Heart right ventricle (tissue), 16 donors: ENCODE measurements at regions of chr1 and their contacts with region 1.

Region 1: DNA sequence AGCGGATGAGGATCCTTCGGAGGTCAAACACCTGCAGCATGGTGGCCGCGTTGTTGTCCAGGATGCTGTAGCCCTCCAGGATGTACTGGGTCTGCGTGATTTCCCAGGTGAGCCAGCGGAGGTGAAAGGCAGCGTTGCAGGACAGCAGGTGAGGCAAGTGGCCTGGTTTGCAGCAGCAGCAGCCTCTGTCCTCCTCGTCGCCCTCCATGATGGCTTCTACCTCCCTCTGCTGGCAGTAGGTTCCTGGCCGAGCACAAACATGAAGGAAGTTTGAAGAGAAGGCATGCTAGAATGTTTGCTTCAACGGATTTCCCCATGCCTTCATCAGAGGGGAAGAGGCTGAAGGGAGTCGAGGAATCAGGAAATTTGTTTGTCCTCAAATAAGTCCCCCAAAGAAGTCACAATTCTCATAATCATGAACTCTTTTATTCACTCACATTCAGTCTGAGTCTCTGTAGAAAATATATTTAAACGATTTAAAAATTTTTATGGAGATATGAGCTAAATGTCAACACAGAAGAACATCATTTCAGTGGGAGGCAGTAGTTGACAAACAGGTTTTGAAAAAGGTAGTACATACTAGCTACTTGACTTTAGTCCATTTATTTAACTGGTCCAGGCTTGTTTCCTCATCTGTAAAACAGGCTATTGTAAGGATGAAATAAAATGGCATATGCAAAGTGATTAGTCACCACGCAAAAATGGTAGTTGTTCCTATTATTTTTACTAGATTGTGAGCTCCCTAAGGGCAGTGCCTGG is 74.9 kb downstream of the NTPCR start:
- DNase-seq: peak; percentile 24 to 41
- ATAC-seq: peak in 6 of 8 donors; percentile 38 to 78 (median 59)
- H3K4me3 ChIP-seq: no peak overlapping the region
- H3K27ac ChIP-seq: no peak overlapping the region
- H3K4me1 ChIP-seq: peaks cover 0 to 15% (median 6%) of the 10 kb centered on the region in 9 donors
- H3K27me3 ChIP-seq: no peaks in the 10 kb centered on the region
- CTCF ChIP-seq: peak; percentile 21 to 73 (median 62)

Region 2: GRCh38 chr1:232508130-232508701 is 517.1 kb before region 1 on chr1:
- intact Hi-C with region 1: no loop called
- DNase-seq: no peak
- ATAC-seq: peak in 5 of 8 donors; percentile 49 to 76 (median 63)
- H3K4me3 ChIP-seq: no peak overlapping the region
- H3K27ac ChIP-seq: peak overlapping the region in 5 of 10 donors; percentile 2 to 49 (median 15)
- H3K4me1 ChIP-seq: peaks cover 16 to 71% (median 46%) of the 10 kb centered on the region in 9 donors
- H3K27me3 ChIP-seq: no peaks in the 10 kb centered on the region
- CTCF ChIP-seq: peak in 5 of 9 donors; percentile 21 to 43 (median 34)

Region 3: GRCh38 chr1:232635778-232636356 is 389.5 kb before region 1 on chr1:
- intact Hi-C with region 1: loop called (anchors 1 to 10 kb)
- DNase-seq: no peak
- ATAC-seq: peak in 6 of 8 donors; percentile 53 to 79 (median 70)
- H3K4me3 ChIP-seq: no peak overlapping the region
- H3K27ac ChIP-seq: no peak overlapping the region
- H3K4me1 ChIP-seq: peaks cover 0 to 10% (median 3%) of the 10 kb centered on the region in 9 donors
- H3K27me3 ChIP-seq: no peaks in the 10 kb centered on the region
- CTCF ChIP-seq: peak; percentile 50 to 89 (median 85)

Region 4: GRCh38 chr1:233208687-233209086 is 183.4 kb after region 1 on chr1:
- intact Hi-C with region 1: no loop called
- DNase-seq: no peak
- ATAC-seq: no peak
- H3K4me3 ChIP-seq: no peak overlapping the region
- H3K27ac ChIP-seq: no peak overlapping the region
- H3K4me1 ChIP-seq: no peaks in the 10 kb centered on the region
- H3K27me3 ChIP-seq: peaks cover 0 to 6% (median 0%) of the 10 kb centered on the region in 7 donors
- CTCF ChIP-seq: no peak